Cardiac septum (tissue), 1 donor: ENCODE measurements at regions of chr14 and their contacts with region 1.

Region 1: DNA sequence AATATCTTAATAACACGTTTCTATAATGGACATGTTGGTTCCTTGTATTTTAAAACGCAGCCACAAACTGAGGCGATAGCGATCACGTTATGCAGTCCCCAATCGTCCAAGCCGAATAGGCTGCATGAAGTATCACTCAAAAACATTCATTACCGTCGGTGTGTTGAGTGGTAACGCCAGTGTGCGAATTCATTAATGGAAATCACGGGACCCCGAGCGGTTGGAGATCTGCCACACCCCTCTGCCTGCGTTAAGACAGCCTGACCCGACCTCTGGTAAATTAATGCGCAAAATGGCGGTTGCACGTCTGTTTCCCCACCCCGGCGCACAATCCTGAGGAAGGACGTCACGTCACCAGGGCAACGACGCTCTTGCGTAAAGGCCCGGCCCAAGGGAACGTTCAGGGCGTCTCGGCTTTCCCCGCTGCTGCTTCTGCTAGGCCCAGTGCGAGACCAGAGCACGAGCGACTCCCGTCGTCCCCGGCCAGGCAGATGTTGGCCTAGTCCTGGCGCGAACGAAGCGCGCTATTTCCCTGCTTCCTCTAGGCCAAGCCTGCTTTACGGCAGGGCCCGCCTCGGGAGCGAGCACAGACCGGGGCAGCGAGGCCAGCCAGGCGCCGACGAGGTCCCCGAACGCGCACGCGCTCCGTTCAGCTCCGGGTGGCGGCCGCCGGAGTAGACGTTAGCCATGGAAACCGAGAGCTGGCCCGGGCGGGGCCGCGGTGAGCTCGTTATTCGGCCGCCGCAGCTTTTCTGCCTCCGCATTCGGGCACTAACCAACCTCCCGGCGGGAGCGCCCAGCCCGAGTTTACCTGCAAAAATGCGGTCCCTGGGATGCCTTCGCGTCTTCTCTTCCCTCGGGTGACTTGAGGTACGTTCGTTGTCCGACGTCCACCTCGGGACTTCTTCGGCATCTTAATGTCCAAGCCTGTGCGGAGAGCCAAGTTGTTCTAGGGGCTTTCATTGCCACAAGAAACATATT is at the start of gene PCNX4:
- DNase-seq: peak; percentile 99
- total RNA-seq, gene PCNX4: 44.2 TPM

Region 2: GRCh38 chr14:60116181-60116580 is 24.3 kb after region 1 on chr14:
- intact Hi-C with region 1: no loop called
- DNase-seq: no peak

Region 3: DNA sequence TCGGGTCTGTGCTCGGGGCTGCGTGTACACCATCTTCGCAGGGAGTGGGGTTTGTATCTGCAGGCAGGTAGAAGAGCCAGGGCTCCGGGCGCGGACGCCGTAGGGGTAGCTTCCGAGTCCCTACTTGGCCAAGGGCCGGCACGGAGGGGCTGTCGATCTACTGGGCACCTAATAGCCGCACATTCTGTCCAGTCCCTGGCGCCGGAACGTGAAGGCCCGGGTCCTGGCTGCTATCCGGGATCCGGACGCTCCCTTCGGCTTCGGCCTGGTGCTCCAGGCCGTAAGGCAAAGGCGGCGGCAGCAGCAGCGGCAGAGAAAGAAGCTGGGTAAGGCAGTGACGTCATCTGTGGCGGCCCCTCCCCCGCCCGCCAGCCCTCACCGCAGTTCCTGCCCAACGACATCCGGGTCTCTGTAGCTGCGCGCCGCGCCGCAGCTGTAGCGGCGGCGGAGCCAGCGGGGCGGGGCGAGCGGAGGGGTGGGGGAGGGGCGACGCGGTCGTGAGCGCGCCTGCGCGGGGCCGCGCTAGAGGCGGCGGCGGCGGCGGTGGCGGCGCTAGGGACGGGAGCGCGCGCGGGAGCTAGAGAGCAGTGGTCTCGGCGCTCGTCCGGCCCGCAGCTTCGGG is 157.0 kb after region 1 on chr14 and contains the start of gene PPM1A:
- intact Hi-C with region 1: loop called (anchors 2 kb)
- DNase-seq: peak; percentile 98
- total RNA-seq, gene PPM1A: 88.5 TPM